PC-9 (cell line): ENCODE measurements at regions of chr2 and their contacts with region 1.

Region 1: DNA sequence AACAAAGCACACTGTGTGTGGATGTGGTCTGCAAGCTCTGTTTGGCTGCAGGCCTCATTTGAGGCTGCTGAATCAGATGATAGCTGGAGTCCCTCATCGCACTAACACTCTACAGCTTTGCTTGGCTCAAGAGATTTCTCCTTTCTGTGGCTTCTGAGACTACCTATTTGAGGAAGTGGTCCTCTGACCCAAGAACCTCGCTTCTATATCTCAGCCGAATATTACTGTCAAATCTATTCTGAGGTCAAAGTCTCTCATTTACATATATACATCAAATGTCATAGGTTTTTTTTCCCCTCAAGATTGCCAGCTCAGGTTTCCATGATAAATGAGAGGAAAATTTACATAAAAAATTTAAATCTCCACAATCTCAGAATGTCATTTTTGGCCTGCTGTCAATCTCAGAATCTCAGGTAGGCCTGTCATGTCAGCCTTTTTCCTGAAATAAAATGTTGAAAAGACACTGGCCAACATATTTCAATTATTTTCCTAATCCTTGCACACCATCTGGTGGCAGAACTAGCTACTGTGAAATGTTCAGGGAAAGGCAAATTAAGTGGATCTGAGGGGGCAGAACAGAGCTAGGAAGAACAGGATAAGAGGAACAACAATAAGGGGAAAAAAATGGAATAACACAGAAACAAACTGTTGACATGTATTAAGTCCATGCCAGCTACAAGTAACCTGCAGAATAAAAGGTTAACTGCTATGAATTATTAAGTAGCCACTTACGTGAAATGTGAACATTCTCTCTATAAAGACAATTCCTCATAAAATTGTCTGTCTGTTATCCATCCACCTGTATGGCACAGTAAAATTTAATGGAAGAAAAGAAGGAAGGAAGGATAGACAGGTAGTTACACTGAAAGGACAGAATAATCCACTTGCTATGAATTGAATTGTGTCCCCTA is 39.3 kb downstream of the AP1S3 start:
- DNase-seq: peak; percentile 46 to 73
- H3K4me3 ChIP-seq: no peak overlapping the region
- H3K27ac ChIP-seq: peak overlapping the region; percentile 95
- H3K4me1 ChIP-seq: peaks cover 76% of the 10 kb centered on the region
- H3K27me3 ChIP-seq: no peaks in the 10 kb centered on the region
- CTCF ChIP-seq: peak; percentile 95

Region 2: DNA sequence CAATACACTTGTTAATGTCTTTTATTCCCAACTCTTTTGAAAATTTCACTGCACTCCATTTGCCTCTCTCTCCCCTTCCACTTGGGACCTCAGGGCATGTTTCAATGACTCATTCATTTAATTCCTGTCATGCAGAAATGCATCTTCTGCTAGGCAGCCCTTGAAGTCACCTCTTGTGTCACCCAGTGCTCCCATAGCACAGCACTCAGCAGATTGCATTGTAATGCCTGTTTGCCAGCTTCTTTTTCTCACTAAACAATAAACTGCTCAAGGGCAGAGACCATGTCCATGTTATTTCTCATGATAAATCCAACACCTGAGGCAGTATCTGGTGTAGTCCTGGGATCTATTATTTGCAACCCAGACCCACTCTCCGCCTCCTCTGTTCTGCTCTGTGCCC is 1023.1 kb before region 1 on chr2:
- CTCF ChIA-PET with region 1: no interaction called
- POLR2A ChIA-PET with region 1: interaction called, 11 read pairs
- intact Hi-C with region 1: no loop called
- DNase-seq: peak; percentile 76 to 98
- H3K4me3 ChIP-seq: no peak overlapping the region
- H3K27ac ChIP-seq: peak overlapping the region; percentile 62
- H3K4me1 ChIP-seq: peaks cover 20% of the 10 kb centered on the region
- H3K27me3 ChIP-seq: no peaks in the 10 kb centered on the region
- CTCF ChIP-seq: no peak

Region 3: DNA sequence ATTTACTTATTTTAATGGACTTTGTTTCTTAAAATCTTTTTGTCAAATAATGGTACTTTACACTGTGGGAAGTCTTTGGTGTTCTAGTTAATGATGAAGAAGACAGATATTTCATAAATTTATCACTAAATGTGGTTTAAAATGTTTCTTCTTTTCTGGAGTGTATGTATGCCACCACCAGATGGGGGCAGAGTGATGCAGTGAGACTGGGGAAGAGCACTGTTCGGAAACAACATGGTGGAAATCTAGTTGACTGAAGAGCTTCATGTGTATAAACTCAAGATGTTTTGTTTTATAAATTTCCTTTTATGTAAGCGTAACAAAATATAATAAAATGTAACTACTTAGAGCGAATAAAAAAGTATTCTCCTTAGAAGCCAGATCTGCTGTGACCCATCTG is 550.9 kb before region 1 on chr2:
- CTCF ChIA-PET with region 1: interaction called, 14 read pairs
- POLR2A ChIA-PET with region 1: no interaction called
- intact Hi-C with region 1: loop called (anchors 1 kb)
- DNase-seq: peak in 1 of 2 experiments; percentile 47
- H3K4me3 ChIP-seq: no peak overlapping the region
- H3K27ac ChIP-seq: no peak overlapping the region
- H3K4me1 ChIP-seq: no peaks in the 10 kb centered on the region
- H3K27me3 ChIP-seq: no peaks in the 10 kb centered on the region
- CTCF ChIP-seq: peak; percentile 93

Region 4: DNA sequence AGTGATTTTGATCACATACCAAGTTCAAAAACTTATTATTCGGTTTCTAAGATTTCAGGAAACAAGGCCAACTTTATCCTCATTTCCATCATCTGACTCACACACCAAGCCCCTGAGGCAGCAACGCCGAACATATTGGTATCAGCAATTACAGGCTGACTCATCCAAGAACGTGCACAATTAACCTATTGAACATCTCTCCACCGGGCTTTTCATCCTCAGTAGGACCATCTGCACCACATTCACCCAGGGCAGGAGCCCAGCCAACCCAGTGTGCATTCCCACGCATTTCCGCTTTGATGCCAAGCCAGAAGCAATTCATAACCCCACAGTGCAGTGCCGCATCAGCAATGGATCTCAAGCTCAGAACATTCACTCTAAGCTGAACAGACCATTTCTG is 248.9 kb before region 1 on chr2:
- CTCF ChIA-PET with region 1: interaction called, 3 read pairs
- POLR2A ChIA-PET with region 1: no interaction called
- intact Hi-C with region 1: loop called (anchors 1 kb)
- DNase-seq: peak; percentile 96 to 100
- H3K4me3 ChIP-seq: peak overlapping the region; percentile 8; the same call in 1 of the 2 replicates
- H3K27ac ChIP-seq: peak overlapping the region; percentile 89
- H3K4me1 ChIP-seq: peaks cover 54% of the 10 kb centered on the region
- H3K27me3 ChIP-seq: no peaks in the 10 kb centered on the region
- CTCF ChIP-seq: no peak

Region 5: GRCh38 chr2:223647258-223647952 is 150.7 kb before region 1 on chr2:
- CTCF ChIA-PET with region 1: no interaction called
- POLR2A ChIA-PET with region 1: no interaction called
- intact Hi-C with region 1: no loop called
- DNase-seq: no peak
- H3K4me3 ChIP-seq: no peak overlapping the region
- H3K27ac ChIP-seq: no peak overlapping the region
- H3K4me1 ChIP-seq: no peaks in the 10 kb centered on the region
- H3K27me3 ChIP-seq: no peaks in the 10 kb centered on the region
- CTCF ChIP-seq: no peak

Region 6: DNA sequence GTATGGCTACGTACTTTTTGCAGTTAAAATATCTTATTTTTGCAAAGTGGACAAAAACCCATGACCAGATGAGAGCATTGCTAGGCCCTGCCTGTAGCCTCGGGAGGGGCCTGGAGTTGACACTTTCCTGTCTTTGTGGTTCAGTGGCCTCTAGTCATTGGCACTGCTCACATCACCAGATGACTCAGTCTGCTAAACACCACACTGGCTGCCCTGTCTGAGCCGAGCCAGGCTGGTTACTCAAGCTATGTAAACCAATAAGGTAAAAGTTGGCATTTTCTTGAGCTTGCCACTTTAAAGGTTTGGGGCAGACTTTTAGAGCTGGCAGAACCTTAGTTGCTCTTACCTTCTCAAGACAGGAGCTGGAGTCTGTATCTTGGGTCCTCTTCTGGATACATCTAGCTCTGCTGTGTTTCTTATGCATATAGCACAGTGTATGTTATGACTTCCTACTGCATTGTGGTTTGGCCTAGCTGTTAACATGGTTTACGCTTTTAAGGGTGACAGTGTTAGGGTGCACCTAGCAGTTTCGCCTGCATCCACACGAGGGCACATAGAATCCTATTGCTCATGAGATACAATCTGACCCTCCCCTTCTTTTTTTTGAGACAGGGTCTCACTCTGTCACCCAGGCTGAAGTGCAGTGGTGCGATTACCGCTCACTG is 37.1 kb before region 1 on chr2:
- CTCF ChIA-PET with region 1: interaction called, 15 read pairs
- POLR2A ChIA-PET with region 1: interaction called, 10 read pairs
- intact Hi-C with region 1: loop called (anchors 1 kb)
- DNase-seq: peak; percentile 91 to 99
- H3K4me3 ChIP-seq: peak overlapping the region; percentile 42; the same call in 1 of the 2 replicates
- H3K27ac ChIP-seq: peak overlapping the region; percentile 96
- H3K4me1 ChIP-seq: peaks cover 42% of the 10 kb centered on the region
- H3K27me3 ChIP-seq: no peaks in the 10 kb centered on the region
- CTCF ChIP-seq: peak; percentile 60

Region 7: GRCh38 chr2:223944703-223945531 is 146.9 kb after region 1 on chr2 and contains the start of gene WDFY1:
- CTCF ChIA-PET with region 1: interaction called, 6 read pairs
- POLR2A ChIA-PET with region 1: interaction called, 20 read pairs
- intact Hi-C with region 1: loop called (anchors 2 kb)
- DNase-seq: peak; percentile 77 to 94
- H3K4me3 ChIP-seq: peak within 1 kb of the TSS; percentile 74
- H3K27ac ChIP-seq: 0 out of 2 replicates have a peak within 1 kb of the TSS, but pooled peaks have one; percentile 1
- H3K4me1 ChIP-seq: peaks cover 42% of the 10 kb centered on the region
- H3K27me3 ChIP-seq: no peaks in the 10 kb centered on the region
- CTCF ChIP-seq: no peak
- total RNA-seq, gene WDFY1: 81.9 and 84.4 TPM in 2 replicates

Region 8: DNA sequence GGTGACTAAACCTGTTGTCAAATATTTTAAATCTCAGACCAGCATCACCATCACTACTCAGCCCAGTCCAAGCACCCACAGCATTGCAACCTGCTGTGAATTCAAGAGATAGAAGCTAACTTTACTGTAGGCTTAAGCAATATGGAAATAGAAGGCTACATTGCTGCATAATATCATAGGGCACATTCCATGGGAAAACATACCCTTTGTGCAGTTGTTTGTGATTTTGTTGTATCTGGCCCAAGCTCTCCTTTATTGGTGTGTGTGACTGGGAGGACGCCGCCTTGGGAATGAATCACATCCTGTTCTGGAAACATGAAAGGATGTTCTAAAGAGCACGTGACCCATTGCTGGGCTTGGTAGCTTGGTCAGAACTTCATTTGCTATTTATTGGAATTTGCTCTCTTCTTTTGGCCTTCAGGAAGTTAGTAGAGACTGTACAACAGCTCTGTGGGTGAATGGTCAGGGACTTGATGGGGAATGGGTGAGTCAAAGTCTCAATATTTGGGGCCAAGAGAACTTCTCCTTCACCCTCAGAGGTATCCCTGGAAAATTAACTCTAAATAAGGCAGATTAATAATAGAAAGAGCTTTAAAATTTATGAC is 347.8 kb after region 1 on chr2:
- CTCF ChIA-PET with region 1: no interaction called
- POLR2A ChIA-PET with region 1: no interaction called
- intact Hi-C with region 1: no loop called
- DNase-seq: peak; percentile 36 to 51
- H3K4me3 ChIP-seq: no peak overlapping the region
- H3K27ac ChIP-seq: 0 out of 2 replicates have a peak overlapping the region, but pooled peaks have one; percentile 5
- H3K4me1 ChIP-seq: peaks cover 72% of the 10 kb centered on the region
- H3K27me3 ChIP-seq: no peaks in the 10 kb centered on the region
- CTCF ChIP-seq: no peak